ENCODE measurements at regions of chr4 and their contacts with region 1.

Region 1: DNA sequence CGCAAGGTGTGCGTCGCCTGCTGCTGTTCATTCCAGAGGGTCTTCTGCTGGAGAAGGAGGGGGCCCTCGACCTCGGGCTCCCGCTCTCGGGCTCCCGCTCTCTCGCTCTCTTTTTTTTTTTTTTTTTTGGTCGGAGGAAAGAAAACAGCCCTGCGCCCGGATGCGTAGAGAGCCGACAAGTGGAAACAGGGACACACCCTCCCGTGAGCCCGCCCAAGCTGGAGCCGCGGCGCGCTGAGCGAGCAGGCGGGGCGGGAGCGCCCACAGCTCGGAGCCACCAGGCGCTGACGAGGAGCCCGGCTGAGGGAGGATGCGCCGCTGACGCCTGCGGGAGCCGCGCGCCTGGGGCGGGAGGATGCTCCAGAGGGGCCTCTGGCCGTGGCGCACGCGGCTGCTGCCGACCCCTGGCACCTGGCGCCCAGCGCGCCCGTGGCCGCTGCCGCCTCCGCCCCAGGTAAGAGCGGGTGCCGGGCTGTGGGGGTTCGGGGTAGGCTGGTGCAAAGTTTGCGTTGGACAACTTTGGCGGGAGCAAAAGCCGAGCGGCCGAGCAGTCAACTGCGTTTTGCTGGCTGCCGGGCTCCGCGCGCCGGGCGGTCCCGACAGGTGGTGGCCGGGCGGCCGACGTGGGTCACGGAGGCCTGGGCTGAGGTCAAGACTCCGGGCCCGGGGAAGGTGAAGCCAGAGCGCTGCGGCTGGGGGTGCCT is at the start of gene MCUB:
- DNase-seq: peak; percentile 80 to 95 (median 93)
- ATAC-seq: peak; percentile 96
- H3K4me3 ChIP-seq: peak within 1 kb of the TSS; percentile 83
- H3K4me3 Mint-ChIP-seq: peak within 1 kb of the TSS; percentile 89 to 100 (median 98)
- H3K27ac ChIP-seq: peak within 1 kb of the TSS; percentile 96
- H3K27ac Mint-ChIP-seq: peak within 1 kb of the TSS; percentile 90 to 100 (median 98)
- H3K4me1 ChIP-seq: peaks cover 25 to 41% of the 10 kb centered on the region in 2 donors
- H3K4me1 Mint-ChIP-seq: peaks cover 34 to 76% (median 58%) of the 10 kb centered on the region in 7 donors
- H3K27me3 ChIP-seq: no peaks in the 10 kb centered on the region
- H3K27me3 Mint-ChIP-seq: no peaks in the 10 kb centered on the region
- total RNA-seq, gene MCUB: 83.4 to 177 (median 114) TPM

Region 2: DNA sequence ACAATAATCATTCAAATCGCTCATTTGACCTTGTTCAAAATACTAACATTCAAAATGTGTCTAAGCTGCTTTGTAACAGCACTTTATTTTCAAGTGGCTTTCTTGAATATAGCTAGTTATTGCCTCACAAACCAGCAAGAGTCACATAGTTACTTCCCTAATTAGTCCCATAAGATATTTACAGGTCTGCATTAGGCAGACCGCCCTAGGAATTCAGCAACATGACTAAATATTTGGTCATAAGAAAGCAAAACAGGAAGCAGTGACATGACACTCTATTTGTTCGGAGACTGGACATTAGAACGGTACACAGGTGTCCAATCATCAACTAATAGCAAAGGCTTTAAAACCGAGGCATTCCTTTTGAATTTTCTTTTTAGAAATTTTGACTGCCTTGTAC is 519.7 kb before region 1 on chr4:
- CTCF ChIA-PET with region 1: no interaction called
- POLR2A ChIA-PET with region 1: no interaction called
- intact Hi-C with region 1: no loop called
- DNase-seq: no peak
- ATAC-seq: peak; percentile 67
- H3K4me3 ChIP-seq: no peak overlapping the region
- H3K4me3 Mint-ChIP-seq: no peak overlapping the region
- H3K27ac ChIP-seq: no peak overlapping the region
- H3K27ac Mint-ChIP-seq: no peak overlapping the region
- H3K4me1 ChIP-seq: no peaks in the 10 kb centered on the region
- H3K4me1 Mint-ChIP-seq: peaks cover 0 to 3% (median 0%) of the 10 kb centered on the region in 7 donors
- H3K27me3 ChIP-seq: no peaks in the 10 kb centered on the region
- H3K27me3 Mint-ChIP-seq: peaks cover 5 to 14% (median 6%) of the 10 kb centered on the region in 5 donors

Region 3: GRCh38 chr4:109433205-109434006 is 126.7 kb before region 1 on chr4 and contains the start of gene SEC24B:
- CTCF ChIA-PET with region 1: interaction called, 12 read pairs
- POLR2A ChIA-PET with region 1: interaction called, 9 read pairs
- intact Hi-C with region 1: loop called (anchors 1 kb)
- DNase-seq: peak; percentile 84 to 91 (median 90)
- ATAC-seq: peak; percentile 95
- H3K4me3 ChIP-seq: peak within 1 kb of the TSS; percentile 74
- H3K4me3 Mint-ChIP-seq: peak within 1 kb of the TSS; percentile 83 to 94 (median 88)
- H3K27ac ChIP-seq: peak within 1 kb of the TSS; percentile 93
- H3K27ac Mint-ChIP-seq: peak within 1 kb of the TSS; percentile 75 to 95 (median 93)
- H3K4me1 ChIP-seq: peaks cover 11 to 19% of the 10 kb centered on the region in 2 donors
- H3K4me1 Mint-ChIP-seq: peaks cover 29 to 61% (median 54%) of the 10 kb centered on the region in 7 donors
- H3K27me3 ChIP-seq: no peaks in the 10 kb centered on the region
- H3K27me3 Mint-ChIP-seq: no peaks in the 10 kb centered on the region
- total RNA-seq, gene SEC24B: 29.2 to 41.8 (median 35.2) TPM

Region 4: GRCh38 chr4:109548655-109549054 is 11.5 kb before region 1 on chr4:
- CTCF ChIA-PET with region 1: no interaction called
- POLR2A ChIA-PET with region 1: interaction called, 7 read pairs
- intact Hi-C with region 1: loop called in 1 of 2 experiments (anchors 1 kb)
- DNase-seq: no peak
- ATAC-seq: peak; percentile 88
- H3K4me3 ChIP-seq: no peak overlapping the region
- H3K4me3 Mint-ChIP-seq: peak overlapping the region in 4 of 10 donors; percentile 8 to 55 (median 12)
- H3K27ac ChIP-seq: no peak overlapping the region
- H3K27ac Mint-ChIP-seq: peak overlapping the region in 6 of 9 donors; percentile 1 to 73 (median 40)
- H3K4me1 ChIP-seq: no peaks in the 10 kb centered on the region
- H3K4me1 Mint-ChIP-seq: peaks cover 11 to 46% (median 35%) of the 10 kb centered on the region in 7 donors
- H3K27me3 ChIP-seq: no peaks in the 10 kb centered on the region
- H3K27me3 Mint-ChIP-seq: no peaks in the 10 kb centered on the region

Region 5: GRCh38 chr4:109640644-109641043 is 80.5 kb after region 1 on chr4:
- CTCF ChIA-PET with region 1: no interaction called
- POLR2A ChIA-PET with region 1: interaction called, 15 read pairs
- intact Hi-C with region 1: no loop called
- DNase-seq: no peak
- ATAC-seq: no peak
- H3K4me3 ChIP-seq: no peak overlapping the region
- H3K4me3 Mint-ChIP-seq: peak overlapping the region in 5 of 10 donors; percentile 40 to 71 (median 62)
- H3K27ac ChIP-seq: no peak overlapping the region
- H3K27ac Mint-ChIP-seq: peak overlapping the region in 8 of 9 donors; percentile 52 to 89 (median 80)
- H3K4me1 ChIP-seq: peaks cover 12 to 16% of the 10 kb centered on the region in 2 donors
- H3K4me1 Mint-ChIP-seq: peaks cover 24 to 66% (median 57%) of the 10 kb centered on the region in 7 donors
- H3K27me3 ChIP-seq: no peaks in the 10 kb centered on the region
- H3K27me3 Mint-ChIP-seq: no peaks in the 10 kb centered on the region

Region 6: GRCh38 chr4:109658871-109659410 is 98.8 kb after region 1 on chr4:
- CTCF ChIA-PET with region 1: interaction called, 14 read pairs
- POLR2A ChIA-PET with region 1: interaction called, 12 read pairs
- intact Hi-C with region 1: loop called in 1 of 2 experiments (anchors 1 kb)
- DNase-seq: peak in 5 of 9 donors; percentile 26 to 47 (median 31)
- ATAC-seq: peak; percentile 54
- H3K4me3 ChIP-seq: no peak overlapping the region
- H3K4me3 Mint-ChIP-seq: peak overlapping the region in 5 of 10 donors; percentile 14 to 66 (median 44)
- H3K27ac ChIP-seq: peak overlapping the region; percentile 38
- H3K27ac Mint-ChIP-seq: peak overlapping the region in 7 of 9 donors; percentile 59 to 83 (median 76)
- H3K4me1 ChIP-seq: peaks cover 0 to 32% of the 10 kb centered on the region in 2 donors
- H3K4me1 Mint-ChIP-seq: peaks cover 15 to 78% (median 58%) of the 10 kb centered on the region in 7 donors
- H3K27me3 ChIP-seq: no peaks in the 10 kb centered on the region
- H3K27me3 Mint-ChIP-seq: no peaks in the 10 kb centered on the region

Measured in naive thymus-derived CD4-positive, alpha-beta T cell (primary cell).